Dorsolateral prefrontal cortex (tissue), 120 donors: ENCODE measurements at regions of chr2 and their contacts with region 1.

Region 1: GRCh38 chr2:56132138-56132537 is 51.7 kb upstream of the CCDC85A start:
- DNase-seq: no peak
- H3K4me3 ChIP-seq: no peak overlapping the region
- H3K27ac ChIP-seq: no peak overlapping the region
- H3K27me3 ChIP-seq: peaks cover 0 to 5% (median 0%) of the 10 kb centered on the region in 45 donors
- CTCF ChIP-seq: peak; percentile 55 to 89 (median 71)

Region 2: DNA sequence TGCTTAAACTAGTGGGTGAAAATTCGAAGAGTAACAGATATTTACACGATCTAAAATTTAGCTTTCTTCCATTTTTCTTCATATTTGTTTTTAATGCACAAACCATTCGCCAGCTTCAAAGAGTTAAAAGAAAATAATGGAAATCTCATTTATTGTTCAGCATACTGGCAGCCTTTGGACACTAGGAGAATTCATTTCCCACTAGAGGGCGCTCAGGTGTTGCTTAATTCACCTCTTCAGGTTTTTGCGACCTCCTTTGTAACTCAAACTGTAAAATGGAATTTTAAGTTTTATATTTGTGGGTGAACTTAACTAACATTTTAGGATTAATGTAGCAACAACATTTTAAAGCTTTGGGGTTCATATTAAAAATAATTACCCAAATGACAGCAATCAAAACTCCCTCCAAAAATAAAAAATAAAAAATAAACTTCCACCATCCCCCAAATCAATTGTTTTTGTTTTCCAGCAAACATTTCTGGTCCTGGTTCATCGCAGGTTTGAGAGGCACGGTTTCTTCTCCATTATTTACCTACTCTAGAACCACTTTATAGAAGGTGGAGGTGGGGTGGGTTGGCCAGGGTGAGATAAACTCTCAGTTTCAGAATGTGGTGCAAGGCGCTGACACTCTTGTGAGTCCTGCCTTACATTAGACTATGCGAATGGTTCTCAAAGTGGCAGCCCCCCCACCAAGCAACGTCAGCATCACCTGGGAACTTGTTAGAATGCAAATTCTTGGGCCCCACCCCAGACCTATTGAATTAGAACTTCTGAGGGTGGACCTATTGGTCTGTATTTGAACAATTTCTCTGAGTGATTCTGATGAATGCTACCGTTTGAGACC is 413.8 kb before region 1 on chr2:
- intact Hi-C with region 1: loop called (anchors 5 kb)
- DNase-seq: peak in 4 of 10 donors; percentile 32 to 71 (median 50)
- H3K4me3 ChIP-seq: no peak overlapping the region
- H3K27ac ChIP-seq: no peak overlapping the region
- H3K27me3 ChIP-seq: peaks cover 0 to 4% (median 0%) of the 10 kb centered on the region in 45 donors
- CTCF ChIP-seq: peak; percentile 77 to 97 (median 88)

Region 3: GRCh38 chr2:55771612-55772011 is 360.5 kb before region 1 on chr2:
- intact Hi-C with region 1: loop called in 1 of 2 experiments (anchors 5 kb)
- DNase-seq: no peak
- H3K4me3 ChIP-seq: no peak overlapping the region
- H3K27ac ChIP-seq: no peak overlapping the region
- H3K27me3 ChIP-seq: no peaks in the 10 kb centered on the region
- CTCF ChIP-seq: peak; percentile 37 to 83 (median 66)

Region 4: GRCh38 chr2:55961318-55961911 is 170.7 kb before region 1 on chr2:
- intact Hi-C with region 1: loop called in 1 of 2 experiments (anchors 5 kb)
- DNase-seq: no peak
- H3K4me3 ChIP-seq: no peak overlapping the region
- H3K27ac ChIP-seq: no peak overlapping the region
- H3K27me3 ChIP-seq: peaks cover 0 to 3% (median 0%) of the 10 kb centered on the region in 45 donors
- CTCF ChIP-seq: peak; percentile 46 to 80 (median 67)

Region 5: GRCh38 chr2:56009758-56010458 is 122.2 kb before region 1 on chr2:
- intact Hi-C with region 1: loop called (anchors 5 to 10 kb)
- DNase-seq: no peak
- H3K4me3 ChIP-seq: peak overlapping the region in 48 of 59 donors; percentile 5 to 56 (median 34)
- H3K27ac ChIP-seq: peak overlapping the region in 52 of 59 donors; percentile 7 to 92 (median 81)
- H3K27me3 ChIP-seq: no peaks in the 10 kb centered on the region
- CTCF ChIP-seq: peak; percentile 33 to 87 (median 70)

Region 6: DNA sequence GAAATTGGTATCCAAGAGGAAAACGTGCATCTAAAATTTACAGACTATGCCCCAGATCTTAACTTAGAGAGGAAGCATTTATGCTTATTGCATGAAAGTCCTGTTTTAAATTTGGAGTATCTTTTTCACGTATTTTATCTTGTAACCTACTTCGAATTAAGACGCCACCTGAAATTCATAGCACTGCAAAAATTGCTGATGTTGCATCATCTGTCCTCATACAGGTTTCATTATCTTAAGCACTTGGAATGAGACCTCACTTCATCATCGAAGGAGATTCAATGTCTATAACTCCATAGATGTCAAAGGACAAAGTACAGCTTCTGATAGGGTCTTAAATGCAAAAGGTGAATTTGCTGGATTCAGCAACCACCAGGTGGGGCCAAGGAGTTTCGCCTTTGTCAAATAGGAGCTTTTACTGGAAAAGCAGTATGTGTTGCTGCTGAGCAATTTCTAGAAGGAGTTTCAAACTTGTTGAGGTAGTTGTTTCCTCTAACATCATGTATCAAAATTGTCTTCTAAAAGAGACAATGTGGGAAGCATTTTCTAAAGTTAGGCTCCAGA is 54.7 kb before region 1 on chr2:
- intact Hi-C with region 1: loop called in 1 of 2 experiments (anchors 5 kb)
- DNase-seq: no peak
- H3K4me3 ChIP-seq: no peak overlapping the region
- H3K27ac ChIP-seq: no peak overlapping the region
- H3K27me3 ChIP-seq: no peaks in the 10 kb centered on the region
- CTCF ChIP-seq: peak in 49 of 56 donors; percentile 20 to 68 (median 42)

Region 7: DNA sequence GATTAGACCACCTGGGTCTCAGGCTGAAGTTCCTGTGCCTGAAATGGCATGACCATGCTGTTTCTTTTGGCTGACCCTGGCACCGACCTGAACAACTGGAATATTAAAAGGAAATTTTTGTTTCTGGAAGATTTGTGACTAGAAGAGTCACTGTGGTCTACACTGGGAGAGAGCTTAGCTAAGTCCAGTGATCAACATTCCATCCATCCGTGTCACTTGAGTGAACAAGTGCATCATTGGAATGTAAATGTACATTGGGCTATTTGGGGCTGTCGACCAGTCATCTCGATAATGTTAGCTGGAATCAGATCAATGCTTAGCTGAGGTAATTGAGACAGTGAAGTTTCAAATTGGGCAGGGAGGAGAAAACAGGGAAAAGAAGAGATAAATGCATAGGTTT is 43.7 kb before region 1 on chr2:
- intact Hi-C with region 1: no loop called
- DNase-seq: no peak
- H3K4me3 ChIP-seq: no peak overlapping the region
- H3K27ac ChIP-seq: no peak overlapping the region
- H3K27me3 ChIP-seq: no peaks in the 10 kb centered on the region
- CTCF ChIP-seq: no peak